ENCODE measurements at regions of chr7 and their contacts with region 1.

Region 1: DNA sequence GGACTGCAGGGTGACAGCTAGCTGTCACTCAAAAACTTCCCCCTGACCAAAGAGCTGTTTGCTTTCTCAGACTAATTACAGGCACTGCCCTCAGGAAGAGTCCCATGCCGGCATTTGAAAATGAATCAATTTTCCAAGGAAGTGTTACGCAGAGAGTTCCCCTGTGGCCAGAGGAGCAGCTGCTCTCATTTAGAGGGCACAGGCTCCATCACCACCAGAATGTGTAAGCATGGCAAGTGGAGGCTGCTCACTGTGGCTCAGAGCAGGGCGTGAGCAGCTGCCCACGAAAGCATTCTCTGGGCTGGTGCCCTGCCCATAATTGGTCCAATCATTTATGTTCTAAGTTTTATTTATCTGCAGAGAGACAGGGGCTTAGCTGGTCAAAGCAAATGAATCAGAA is 202.2 kb downstream of the RAMP3 start:
- DNase-seq: no peak
- ATAC-seq: no peak

Region 2: DNA sequence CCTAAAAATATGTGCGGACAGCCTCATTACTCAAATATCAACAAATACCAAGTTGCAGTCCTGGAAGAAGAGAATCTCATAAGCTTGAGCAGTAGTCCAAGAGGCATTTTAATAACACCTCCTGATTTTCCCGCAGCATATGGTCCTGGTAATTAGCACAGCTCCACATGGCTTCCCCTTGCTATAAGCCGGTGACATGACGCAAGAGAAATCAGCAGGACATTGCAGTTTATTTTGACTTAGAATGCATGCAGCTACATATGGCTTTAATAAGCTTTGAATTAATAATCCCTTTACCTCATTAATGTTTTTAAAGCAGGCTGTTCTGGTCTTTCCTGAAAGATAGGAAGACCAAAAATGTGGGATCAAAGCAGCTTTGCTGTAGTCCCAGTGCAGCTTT is 64.6 kb before region 1 on chr7:
- intact Hi-C with region 1: loop called (anchors 2 kb)
- DNase-seq: no peak
- ATAC-seq: no peak

Region 3: DNA sequence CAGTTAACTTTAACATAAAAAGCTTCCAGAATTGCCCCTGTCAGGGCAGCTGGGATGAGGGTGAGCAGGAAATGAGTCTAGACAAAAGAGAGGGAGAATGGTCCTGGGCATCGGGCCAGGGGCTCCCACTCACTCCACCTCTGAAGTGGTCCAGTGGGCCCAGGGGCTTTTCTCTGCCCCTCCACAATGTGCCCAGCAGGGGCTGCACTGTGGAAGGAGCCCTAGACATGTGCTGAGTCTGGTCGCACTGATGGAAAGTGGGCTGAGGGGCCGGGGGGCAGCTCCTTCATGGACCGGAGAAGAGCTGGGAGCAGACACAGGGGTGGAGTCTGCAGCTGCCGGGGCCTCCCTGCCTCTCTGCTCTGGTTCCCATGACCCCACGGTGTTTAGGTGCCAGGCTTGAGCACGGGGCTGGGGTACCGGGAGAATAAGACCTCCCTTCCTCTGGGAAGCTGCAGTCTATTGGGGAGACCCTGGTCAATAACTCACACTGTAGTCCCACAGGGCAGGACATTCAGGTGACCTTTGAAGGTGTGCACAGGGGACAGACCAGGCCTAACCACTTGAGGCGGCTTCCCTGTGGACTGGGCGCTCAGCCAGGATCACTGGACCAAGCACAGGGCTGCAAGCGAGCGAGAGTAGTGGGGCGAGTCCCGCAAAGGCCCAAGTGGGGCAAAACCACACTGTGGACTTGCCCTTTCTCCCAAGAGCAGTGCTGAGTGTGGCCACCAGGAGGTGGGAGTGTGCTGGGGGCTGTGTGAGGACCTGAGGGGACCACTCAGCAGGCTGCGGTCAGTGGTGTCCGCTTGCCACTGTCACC is 220.5 kb after region 1 on chr7:
- intact Hi-C with region 1: no loop called
- DNase-seq: no peak
- ATAC-seq: peak; percentile 24